ENCODE measurements at regions of chr20 and their contacts with region 1.

Region 1: DNA sequence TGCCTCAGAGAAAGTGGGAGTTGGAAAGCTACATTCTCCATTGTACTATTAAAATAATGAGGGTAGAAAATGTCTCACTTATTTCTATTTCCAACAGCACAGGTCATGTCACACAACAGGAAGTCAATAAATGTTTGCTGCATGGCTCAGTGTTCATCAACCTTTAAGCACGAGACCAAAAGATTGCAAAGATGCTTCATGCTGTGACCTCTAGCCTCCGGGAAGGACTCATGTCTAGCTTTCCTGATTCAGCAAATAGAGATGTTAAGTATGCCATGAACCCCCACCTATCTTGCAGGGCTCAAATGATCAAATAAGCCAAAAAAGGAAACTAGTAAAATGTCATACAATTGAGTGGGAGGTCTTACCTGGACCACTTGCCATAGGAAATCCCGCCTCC is 57.4 kb downstream of the NCOA6 start:
- DNase-seq: no peak
- H3K4me3 ChIP-seq: no peak overlapping the region
- H3K27ac ChIP-seq: no peak overlapping the region
- H3K4me1 ChIP-seq: no peaks in the 10 kb centered on the region
- H3K27me3 ChIP-seq: no peaks in the 10 kb centered on the region
- CTCF ChIP-seq: no peak
- EP300 ChIP-seq: no peak
- POLR2A ChIP-seq: no peak

Region 2: DNA sequence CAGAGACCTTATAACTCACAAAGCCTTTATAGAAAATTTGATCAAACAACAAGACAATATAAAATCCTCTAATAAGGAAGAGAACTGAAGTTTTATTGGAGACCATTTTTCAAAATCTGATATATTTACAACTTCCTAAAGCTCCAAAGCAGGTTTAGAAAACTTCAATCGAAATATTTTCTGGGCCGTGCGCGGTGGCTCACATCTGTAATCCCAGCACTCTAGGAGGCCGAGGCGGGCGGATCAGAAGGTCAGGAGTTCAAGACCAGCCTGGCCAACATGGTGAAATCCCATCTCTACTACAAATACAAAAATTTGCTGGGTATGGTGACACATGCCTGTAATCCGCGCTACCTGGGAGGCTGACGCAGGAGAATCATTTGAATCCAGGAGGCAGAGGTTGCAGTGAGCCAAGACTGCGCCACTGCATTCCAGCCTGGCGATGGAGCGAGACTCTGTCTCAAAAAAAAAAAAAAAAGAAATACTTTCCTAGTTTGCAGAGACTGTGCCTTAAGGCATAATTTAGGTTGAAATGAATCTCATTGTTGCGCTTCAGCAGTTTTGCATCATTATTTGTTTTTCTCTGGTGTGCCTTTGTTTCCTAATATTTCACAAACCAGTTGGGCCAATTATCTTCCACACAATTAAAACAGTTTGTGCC is 587.5 kb before region 1 on chr20:
- intact Hi-C with region 1: loop called in 1 of 4 experiments (anchors 10 kb)
- DNase-seq: no peak
- H3K4me3 ChIP-seq: no peak overlapping the region
- H3K27ac ChIP-seq: no peak overlapping the region
- H3K4me1 ChIP-seq: no peaks in the 10 kb centered on the region
- H3K27me3 ChIP-seq: no peaks in the 10 kb centered on the region
- CTCF ChIP-seq: no peak
- EP300 ChIP-seq: no peak
- POLR2A ChIP-seq: no peak

Region 3: GRCh38 chr20:34415079-34415478 is 353.0 kb before region 1 on chr20:
- intact Hi-C with region 1: no loop called
- DNase-seq: no peak
- H3K4me3 ChIP-seq: no peak overlapping the region
- H3K27ac ChIP-seq: no peak overlapping the region
- H3K4me1 ChIP-seq: no peaks in the 10 kb centered on the region
- H3K27me3 ChIP-seq: no peaks in the 10 kb centered on the region
- CTCF ChIP-seq: no peak
- EP300 ChIP-seq: no peak
- POLR2A ChIP-seq: no peak

Region 4: DNA sequence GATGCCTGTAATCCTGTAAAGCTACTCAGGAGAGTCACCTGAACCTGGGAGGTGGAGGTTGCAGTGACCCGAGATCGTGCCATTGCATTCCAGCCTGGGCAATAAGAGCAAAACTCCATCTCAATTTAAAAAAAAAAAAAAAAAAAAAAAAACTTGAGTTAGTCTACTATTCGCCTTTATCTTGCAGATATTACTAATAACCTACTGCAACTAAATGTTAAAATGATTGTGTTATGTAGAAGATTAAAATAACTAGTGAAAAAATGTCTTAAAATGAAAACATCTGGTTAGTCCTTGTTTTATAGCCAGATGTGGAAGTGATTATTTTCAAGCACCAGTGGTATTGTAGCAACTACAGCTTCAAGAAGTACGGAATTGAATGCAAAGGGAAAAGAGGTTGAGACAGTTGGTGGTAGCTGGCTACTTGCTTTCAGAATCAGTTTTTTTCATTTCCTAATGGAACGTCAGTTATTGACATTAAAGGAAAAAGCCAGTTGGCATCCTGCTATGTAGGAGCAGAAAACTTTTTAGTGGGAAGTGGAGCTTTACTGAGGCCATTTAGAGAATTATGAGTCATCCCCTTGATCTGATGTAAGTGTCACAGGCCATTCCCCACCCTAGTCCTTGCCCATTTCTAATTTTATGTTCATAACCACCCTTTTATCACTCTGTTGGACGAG is 295.7 kb before region 1 on chr20:
- intact Hi-C with region 1: no loop called
- DNase-seq: no peak
- H3K4me3 ChIP-seq: no peak overlapping the region
- H3K27ac ChIP-seq: no peak overlapping the region
- H3K4me1 ChIP-seq: peaks cover 2% of the 10 kb centered on the region
- H3K27me3 ChIP-seq: no peaks in the 10 kb centered on the region
- CTCF ChIP-seq: no peak
- EP300 ChIP-seq: no peak
- POLR2A ChIP-seq: no peak

Region 5: GRCh38 chr20:36113566-36114250 is 1345.6 kb after region 1 on chr20:
- intact Hi-C with region 1: no loop called
- DNase-seq: no peak
- H3K4me3 ChIP-seq: no peak overlapping the region
- H3K27ac ChIP-seq: no peak overlapping the region
- H3K4me1 ChIP-seq: no peaks in the 10 kb centered on the region
- H3K27me3 ChIP-seq: no peaks in the 10 kb centered on the region
- CTCF ChIP-seq: no peak
- EP300 ChIP-seq: no peak
- POLR2A ChIP-seq: no peak

Measured in ovary (tissue), 10 donors.